CD8-positive, alpha-beta memory T cell (primary cell): ENCODE measurements at regions of chr19 and their contacts with region 1.

Region 1: DNA sequence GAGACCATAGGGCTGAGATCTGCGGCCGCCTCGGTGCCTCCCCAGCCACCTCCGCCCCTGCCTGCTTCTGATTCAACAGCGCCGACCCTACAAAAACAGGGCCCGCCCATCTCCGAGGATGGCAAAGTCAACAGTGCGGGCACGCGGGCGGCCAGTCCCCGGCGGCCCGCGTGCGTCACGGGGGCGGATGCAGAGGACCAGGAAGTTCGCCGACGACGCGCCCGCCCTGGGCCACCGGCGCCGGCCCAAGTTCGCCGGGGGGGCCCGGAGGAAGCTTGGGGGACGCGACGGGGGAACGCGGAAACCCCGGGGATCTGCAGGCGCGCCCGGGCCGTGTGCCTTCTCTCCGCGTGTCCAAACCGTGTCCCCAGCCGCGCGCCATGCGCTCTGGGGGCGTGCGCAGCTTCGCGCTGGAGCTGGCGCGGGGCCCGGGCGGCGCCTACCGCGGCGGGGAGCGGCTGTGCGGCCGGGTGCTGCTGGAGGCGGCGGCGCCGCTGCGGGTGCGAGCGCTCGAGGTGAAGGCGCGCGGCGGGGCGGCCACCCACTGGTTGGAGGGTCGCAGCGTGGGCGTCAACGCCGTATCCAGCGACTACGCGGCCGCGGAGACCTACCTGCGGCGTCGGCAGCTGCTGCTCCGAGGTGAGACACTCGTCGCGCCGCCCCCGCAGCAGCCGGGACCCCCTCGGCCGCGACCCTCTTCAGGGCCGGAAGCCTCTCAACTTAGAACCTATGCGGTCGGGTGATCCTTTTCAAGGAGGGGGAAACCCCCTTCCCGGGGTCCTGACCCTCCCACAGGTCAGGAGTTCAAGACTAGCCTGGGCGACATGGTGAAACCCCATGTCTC is 6.8 kb upstream of the ARRDC2 start:
- DNase-seq: peak; percentile 94 to 98 (median 98)
- H3K4me3 ChIP-seq: peak overlapping the region; percentile 90
- H3K4me3 Mint-ChIP-seq: peak overlapping the region; percentile 81 to 95 (median 90)
- H3K27ac ChIP-seq: peak overlapping the region; percentile 88
- H3K27ac Mint-ChIP-seq: peak overlapping the region; percentile 93 to 100 (median 98)
- H3K4me1 ChIP-seq: peaks cover 21% of the 10 kb centered on the region
- H3K4me1 Mint-ChIP-seq: peaks cover 19 to 44% (median 19%) of the 10 kb centered on the region in 3 donors
- H3K27me3 ChIP-seq: no peaks in the 10 kb centered on the region
- H3K27me3 Mint-ChIP-seq: no peaks in the 10 kb centered on the region

Region 2: DNA sequence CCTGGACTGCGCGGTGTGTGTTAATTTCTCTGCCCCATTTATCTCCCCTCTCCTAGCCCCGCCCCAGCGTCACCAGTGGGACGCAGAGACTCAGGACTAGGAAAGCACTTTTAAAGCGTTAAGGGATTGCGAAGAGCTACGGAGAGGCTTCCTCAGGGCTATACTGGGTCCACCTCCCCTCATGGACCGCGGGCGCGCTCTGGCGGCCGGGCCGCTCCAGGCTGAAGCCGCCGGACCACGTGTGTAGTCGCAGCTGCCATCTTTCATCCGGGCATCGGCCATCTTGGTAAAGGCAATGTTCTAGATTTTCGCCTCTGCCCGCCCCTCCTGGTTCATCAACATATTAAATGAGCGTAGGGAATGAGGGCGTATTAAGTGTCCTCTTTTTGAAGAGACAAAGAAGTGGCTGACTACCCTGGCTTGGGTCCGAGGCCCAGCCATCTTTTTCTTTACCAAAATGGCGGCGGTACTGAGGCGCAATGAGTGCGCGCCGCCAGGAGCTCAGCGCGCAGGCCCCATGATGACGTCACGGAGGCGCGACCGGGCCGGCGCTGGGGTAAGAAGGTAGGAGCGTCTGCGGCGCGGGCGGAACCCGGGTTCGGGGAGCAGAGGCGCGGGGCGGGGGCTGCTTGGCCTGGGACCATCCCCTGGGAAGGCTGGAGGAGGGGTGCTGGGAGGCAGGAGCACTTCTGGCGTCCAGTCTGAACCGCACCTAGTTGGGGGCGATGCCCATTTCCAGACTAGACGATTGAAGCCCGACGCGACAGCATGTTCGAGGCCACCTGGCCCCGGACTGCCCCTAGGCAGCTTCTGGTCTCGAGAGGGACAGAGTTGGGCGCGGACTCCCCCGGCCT is 68.4 kb before region 1 on chr19 and contains the start of gene CCDC124:
- CTCF ChIA-PET with region 1: interaction called, 201 read pairs
- POLR2A ChIA-PET with region 1: interaction called, 13 read pairs
- DNase-seq: peak; percentile 86 to 95 (median 93)
- H3K4me3 ChIP-seq: peak within 1 kb of the TSS; percentile 83
- H3K4me3 Mint-ChIP-seq: peak within 1 kb of the TSS; percentile 84 to 97 (median 92)
- H3K27ac ChIP-seq: peak within 1 kb of the TSS; percentile 82
- H3K27ac Mint-ChIP-seq: peak within 1 kb of the TSS; percentile 94 to 100 (median 96)
- H3K4me1 ChIP-seq: peaks cover 14% of the 10 kb centered on the region
- H3K4me1 Mint-ChIP-seq: peaks cover 14 to 31% (median 16%) of the 10 kb centered on the region in 3 donors
- H3K27me3 ChIP-seq: no peaks in the 10 kb centered on the region
- H3K27me3 Mint-ChIP-seq: no peaks in the 10 kb centered on the region
- total RNA-seq, gene CCDC124: 184 to 195 TPM

Region 3: DNA sequence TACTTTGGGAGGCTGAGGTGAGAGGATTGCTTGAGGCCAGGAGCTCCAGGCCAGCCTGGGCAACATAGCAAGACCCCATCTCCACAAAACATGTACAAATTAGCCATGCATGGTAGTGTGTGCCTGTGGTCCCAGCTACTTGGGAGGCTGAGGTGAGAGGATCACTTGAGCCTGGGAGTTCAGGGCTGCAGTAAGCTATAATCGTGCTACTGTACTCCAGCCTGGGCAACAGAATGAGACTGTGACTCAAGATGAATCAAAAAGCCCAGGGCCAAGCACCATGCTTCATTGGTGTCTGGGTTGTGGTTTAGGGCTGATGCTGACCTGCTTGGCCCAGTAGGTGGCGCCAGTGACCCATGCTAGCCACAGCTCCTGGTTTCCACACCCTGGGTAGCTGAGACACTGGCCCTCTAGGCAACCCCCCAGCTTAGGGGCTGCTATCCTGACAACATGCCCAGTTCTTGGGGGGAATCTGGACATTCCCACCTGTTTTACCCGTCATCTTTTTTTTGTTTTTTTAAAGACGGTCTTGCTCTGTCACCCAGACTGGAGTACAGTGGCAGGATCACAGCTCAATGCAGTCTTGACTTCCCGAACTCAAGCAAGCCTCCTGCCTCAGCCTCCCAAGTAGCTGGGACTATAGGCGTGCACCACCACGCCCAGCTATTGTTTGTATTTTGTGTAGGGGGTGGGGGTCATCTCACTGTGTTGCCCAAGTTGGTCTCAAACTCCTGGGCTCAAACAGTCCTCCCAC is 62.9 kb before region 1 on chr19:
- CTCF ChIA-PET with region 1: interaction called, 201 read pairs
- POLR2A ChIA-PET with region 1: interaction called, 13 read pairs
- DNase-seq: peak; percentile 71 to 86 (median 76)
- H3K4me3 ChIP-seq: no peak overlapping the region
- H3K4me3 Mint-ChIP-seq: peak overlapping the region in 1 of 7 donors; percentile 26
- H3K27ac ChIP-seq: no peak overlapping the region
- H3K27ac Mint-ChIP-seq: peak overlapping the region in 2 of 8 donors; percentile 65 to 73
- H3K4me1 ChIP-seq: peaks cover 6% of the 10 kb centered on the region
- H3K4me1 Mint-ChIP-seq: peaks cover 7 to 17% (median 10%) of the 10 kb centered on the region in 3 donors
- H3K27me3 ChIP-seq: no peaks in the 10 kb centered on the region
- H3K27me3 Mint-ChIP-seq: no peaks in the 10 kb centered on the region

Region 4: GRCh38 chr19:17947815-17948513 is 53.2 kb before region 1 on chr19:
- CTCF ChIA-PET with region 1: interaction called, 39 read pairs
- POLR2A ChIA-PET with region 1: interaction called, 13 read pairs
- DNase-seq: peak; percentile 93 to 97 (median 95)
- H3K4me3 ChIP-seq: no peak overlapping the region
- H3K4me3 Mint-ChIP-seq: peak overlapping the region; percentile 66 to 92 (median 82)
- H3K27ac ChIP-seq: peak overlapping the region; percentile 51
- H3K27ac Mint-ChIP-seq: peak overlapping the region in 6 of 8 donors; percentile 21 to 100 (median 92)
- H3K4me1 ChIP-seq: peaks cover 50% of the 10 kb centered on the region
- H3K4me1 Mint-ChIP-seq: peaks cover 41 to 54% (median 47%) of the 10 kb centered on the region in 3 donors
- H3K27me3 ChIP-seq: peaks cover 33% of the 10 kb centered on the region
- H3K27me3 Mint-ChIP-seq: peaks cover 30 to 36% of the 10 kb centered on the region in 2 donors

Region 5: DNA sequence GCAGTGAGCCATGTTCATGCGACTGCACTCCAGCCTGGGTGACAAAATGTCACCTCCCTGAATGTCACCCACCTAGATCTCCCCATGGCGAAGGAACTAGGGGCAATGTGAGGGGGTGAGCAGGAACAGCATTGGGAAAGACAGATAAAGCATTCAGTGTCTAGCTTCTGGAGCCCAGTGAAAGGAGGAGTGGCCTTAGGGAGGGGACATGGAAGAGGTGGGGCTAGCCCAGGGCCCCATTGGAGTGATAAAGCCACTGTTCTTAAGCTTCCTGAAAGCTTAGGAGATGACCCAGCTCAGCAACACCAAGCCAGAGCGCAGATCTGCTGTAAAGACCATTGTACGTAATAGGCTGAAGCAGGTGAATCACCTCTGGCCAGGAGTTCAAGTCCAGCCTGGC is 47.3 kb before region 1 on chr19:
- CTCF ChIA-PET with region 1: interaction called, 14 read pairs
- POLR2A ChIA-PET with region 1: interaction called, 13 read pairs
- DNase-seq: no peak
- H3K4me3 ChIP-seq: no peak overlapping the region
- H3K4me3 Mint-ChIP-seq: no peak overlapping the region
- H3K27ac ChIP-seq: peak overlapping the region; percentile 30
- H3K27ac Mint-ChIP-seq: peak overlapping the region in 2 of 8 donors; percentile 29 to 30
- H3K4me1 ChIP-seq: peaks cover 43% of the 10 kb centered on the region
- H3K4me1 Mint-ChIP-seq: peaks cover 26 to 43% (median 29%) of the 10 kb centered on the region in 3 donors
- H3K27me3 ChIP-seq: peaks cover 44% of the 10 kb centered on the region
- H3K27me3 Mint-ChIP-seq: peaks cover 55% of the 10 kb centered on the region in 2 donors

Region 6: GRCh38 chr19:17981611-17982010 is 19.5 kb before region 1 on chr19:
- CTCF ChIA-PET with region 1: no interaction called
- POLR2A ChIA-PET with region 1: no interaction called
- DNase-seq: no peak
- H3K4me3 ChIP-seq: no peak overlapping the region
- H3K4me3 Mint-ChIP-seq: no peak overlapping the region
- H3K27ac ChIP-seq: no peak overlapping the region
- H3K27ac Mint-ChIP-seq: no peak overlapping the region
- H3K4me1 ChIP-seq: no peaks in the 10 kb centered on the region
- H3K4me1 Mint-ChIP-seq: no peaks in the 10 kb centered on the region
- H3K27me3 ChIP-seq: no peaks in the 10 kb centered on the region
- H3K27me3 Mint-ChIP-seq: peaks cover 15 to 21% of the 10 kb centered on the region in 2 donors